ENCODE measurements at regions of chr13 and their contacts with region 1.

Region 1: GRCh38 chr13:106536244-106537034 is 977 bp upstream of the EFNB2 start:
- DNase-seq: peak; percentile 87
- H3K4me3 ChIP-seq: peak overlapping the region; percentile 64 to 69
- H3K27ac ChIP-seq: peak overlapping the region; percentile 43 to 57
- H3K4me1 ChIP-seq: no peaks in the 10 kb centered on the region
- H3K27me3 ChIP-seq: no peaks in the 10 kb centered on the region
- CTCF ChIP-seq: peak; percentile 91 to 95 (median 94)
- POLR2A ChIP-seq: no peak

Region 2: GRCh38 chr13:104571893-104572229 is 1964.6 kb before region 1 on chr13:
- intact Hi-C with region 1: loop called (anchors 2 kb)
- DNase-seq: no peak
- H3K4me3 ChIP-seq: no peak overlapping the region
- H3K27ac ChIP-seq: peak overlapping the region; percentile 55 to 70
- H3K4me1 ChIP-seq: peaks cover 3% of the 10 kb centered on the region
- H3K27me3 ChIP-seq: no peaks in the 10 kb centered on the region
- CTCF ChIP-seq: peak in 1 of 4 experiments; percentile 1
- POLR2A ChIP-seq: no peak

Region 3: DNA sequence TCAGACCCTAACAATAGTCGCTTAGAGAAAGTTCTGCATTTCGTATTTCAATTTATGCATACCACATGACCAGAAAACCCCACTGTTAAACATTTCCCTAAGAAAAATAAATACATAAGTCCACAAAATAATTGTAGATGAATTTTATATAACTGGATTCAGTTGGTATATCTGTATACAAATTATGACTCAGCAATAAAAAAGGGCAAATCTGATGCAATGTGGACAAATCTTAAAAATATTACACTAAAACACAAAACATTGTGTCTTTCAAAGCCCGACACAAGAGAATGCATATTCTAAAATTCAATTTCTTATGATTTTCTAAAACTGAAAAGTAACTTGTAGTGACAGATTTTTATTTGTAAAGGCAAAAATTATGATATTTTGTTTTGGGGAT is 1006.0 kb before region 1 on chr13:
- intact Hi-C with region 1: no loop called
- DNase-seq: no peak
- H3K4me3 ChIP-seq: no peak overlapping the region
- H3K27ac ChIP-seq: no peak overlapping the region
- H3K4me1 ChIP-seq: no peaks in the 10 kb centered on the region
- H3K27me3 ChIP-seq: no peaks in the 10 kb centered on the region
- CTCF ChIP-seq: no peak
- POLR2A ChIP-seq: no peak

Region 4: GRCh38 chr13:106471957-106472543 is 64.4 kb before region 1 on chr13:
- intact Hi-C with region 1: no loop called
- DNase-seq: no peak
- H3K4me3 ChIP-seq: no peak overlapping the region
- H3K27ac ChIP-seq: no peak overlapping the region
- H3K4me1 ChIP-seq: no peaks in the 10 kb centered on the region
- H3K27me3 ChIP-seq: no peaks in the 10 kb centered on the region
- CTCF ChIP-seq: no peak
- POLR2A ChIP-seq: no peak

Region 5: DNA sequence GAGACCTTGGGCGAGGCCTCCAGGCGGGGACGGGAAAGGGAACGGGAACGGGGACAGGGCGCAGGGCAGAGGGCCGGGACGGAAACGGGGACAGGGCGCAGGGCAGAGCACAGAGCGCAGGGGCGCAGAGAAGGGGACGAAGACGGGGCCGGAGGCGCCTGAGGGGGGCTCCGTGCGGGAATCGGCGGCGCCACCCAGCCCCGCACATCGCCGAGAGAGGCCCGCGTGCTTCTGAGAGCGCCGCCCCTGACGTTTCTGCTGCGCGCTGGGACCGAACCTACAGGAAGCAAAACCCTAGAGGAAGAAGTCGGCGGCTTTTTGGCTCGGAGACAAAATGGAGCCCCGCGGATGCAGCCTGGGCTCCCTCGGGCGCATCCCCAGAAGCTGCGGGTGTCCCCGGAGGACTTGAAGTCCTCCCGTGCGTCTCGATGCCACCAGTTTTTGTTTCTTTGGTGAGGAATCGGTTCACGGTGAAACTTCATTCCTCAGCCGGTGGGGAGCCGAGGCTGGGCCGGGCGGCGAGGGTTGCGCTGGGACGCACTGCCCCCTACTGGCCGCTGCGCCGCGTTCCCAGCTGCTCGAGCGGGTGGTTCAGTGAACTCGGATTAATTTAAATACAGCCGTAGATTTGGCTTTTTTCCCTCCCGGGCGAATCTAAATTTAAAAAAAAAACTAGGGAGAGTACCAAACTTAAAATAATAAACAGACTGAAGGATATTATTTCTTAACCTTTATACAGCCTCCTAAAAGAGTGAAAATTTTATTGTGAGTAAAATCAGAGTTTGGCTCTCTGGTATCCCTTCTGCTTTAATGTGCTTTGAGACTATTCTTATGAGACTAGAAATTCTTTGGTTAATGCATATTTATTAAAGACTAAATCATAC is 381.5 kb after region 1 on chr13:
- intact Hi-C with region 1: loop called (anchors 10 kb)
- DNase-seq: peak; percentile 59
- H3K4me3 ChIP-seq: peak overlapping the region; percentile 42
- H3K27ac ChIP-seq: peak overlapping the region; percentile 60 to 74
- H3K4me1 ChIP-seq: no peaks in the 10 kb centered on the region
- H3K27me3 ChIP-seq: no peaks in the 10 kb centered on the region
- CTCF ChIP-seq: peak; percentile 77 to 89 (median 87)
- POLR2A ChIP-seq: no peak

Region 6: GRCh38 chr13:107138486-107138885 is 602.0 kb after region 1 on chr13:
- intact Hi-C with region 1: loop called (anchors 10 kb)
- DNase-seq: no peak
- H3K4me3 ChIP-seq: no peak overlapping the region
- H3K27ac ChIP-seq: no peak overlapping the region
- H3K4me1 ChIP-seq: no peaks in the 10 kb centered on the region
- H3K27me3 ChIP-seq: no peaks in the 10 kb centered on the region
- CTCF ChIP-seq: no peak
- POLR2A ChIP-seq: no peak

Measured in prostate gland (tissue), 2 donors.